Naive thymus-derived CD8-positive, alpha-beta T cell (primary cell): ENCODE measurements at regions of chr3 and their contacts with region 1.

Region 1: GRCh38 chr3:71428841-71429596 is 154.5 kb downstream of the FOXP1 start:
- DNase-seq: peak in 2 of 10 donors; percentile 24 to 32
- ATAC-seq: peak; percentile 22 to 37
- H3K4me3 Mint-ChIP-seq: peak overlapping the region; percentile 52 to 79 (median 69)
- H3K27ac Mint-ChIP-seq: peak overlapping the region; percentile 90 to 99 (median 97)
- H3K4me1 Mint-ChIP-seq: peaks cover 59 to 99% (median 97%) of the 10 kb centered on the region in 4 donors
- H3K27me3 Mint-ChIP-seq: no peaks in the 10 kb centered on the region

Region 2: GRCh38 chr3:71345429-71346040 is 83.5 kb before region 1 on chr3:
- POLR2A ChIA-PET with region 1: no interaction called
- DNase-seq: peak in 3 of 10 donors; percentile 15 to 27 (median 16)
- ATAC-seq: no peak
- H3K4me3 Mint-ChIP-seq: peak overlapping the region in 4 of 10 donors; percentile 22 to 47 (median 36)
- H3K27ac Mint-ChIP-seq: peak overlapping the region; percentile 14 to 90 (median 74)
- H3K4me1 Mint-ChIP-seq: peaks cover 27 to 59% (median 52%) of the 10 kb centered on the region in 4 donors
- H3K27me3 Mint-ChIP-seq: no peaks in the 10 kb centered on the region

Region 3: GRCh38 chr3:71451060-71451459 is 22.0 kb after region 1 on chr3:
- POLR2A ChIA-PET with region 1: interaction called, 71 read pairs
- DNase-seq: peak in 5 of 10 donors; percentile 32 to 69 (median 47)
- ATAC-seq: peak; percentile 39 to 65
- H3K4me3 Mint-ChIP-seq: peak overlapping the region; percentile 47 to 86 (median 76)
- H3K27ac Mint-ChIP-seq: peak overlapping the region; percentile 89 to 99 (median 98)
- H3K4me1 Mint-ChIP-seq: peaks cover 61 to 100% (median 98%) of the 10 kb centered on the region in 4 donors
- H3K27me3 Mint-ChIP-seq: no peaks in the 10 kb centered on the region

Region 4: DNA sequence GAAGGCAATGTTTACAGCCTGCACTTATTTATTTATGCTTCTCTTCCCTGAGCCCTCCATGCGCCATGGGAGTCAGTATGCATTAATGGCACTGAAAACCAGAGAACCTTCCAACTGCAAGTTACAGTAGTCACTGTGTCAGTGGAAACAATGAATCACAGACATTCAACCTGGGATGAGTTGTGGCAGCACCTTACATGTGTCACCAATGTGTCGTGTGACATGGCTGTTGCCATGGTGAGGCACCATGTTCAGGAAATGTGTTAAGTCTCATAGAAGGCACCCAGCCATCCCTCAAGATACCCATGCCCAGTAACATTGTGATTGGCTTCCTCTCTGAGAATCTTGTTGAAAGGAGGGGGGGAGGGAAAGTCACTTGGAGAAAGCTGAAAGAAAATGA is 49.5 kb after region 1 on chr3:
- POLR2A ChIA-PET with region 1: no interaction called
- DNase-seq: peak in 9 of 10 donors; percentile 22 to 91 (median 62)
- ATAC-seq: peak; percentile 87 to 89
- H3K4me3 Mint-ChIP-seq: peak overlapping the region; percentile 9 to 85 (median 66)
- H3K27ac Mint-ChIP-seq: peak overlapping the region; percentile 89 to 98 (median 96)
- H3K4me1 Mint-ChIP-seq: peaks cover 38 to 93% (median 87%) of the 10 kb centered on the region in 4 donors
- H3K27me3 Mint-ChIP-seq: no peaks in the 10 kb centered on the region